Activated T-helper 1 cell treated with anti-CD3 and anti-CD28 coated beads, Interleukin-12 subunit alpha, Interleukin-12 subunit beta, Interleukin-2, Interleukin-4 antibody, amounts not matched to agents 30 ng/mL and 10 ng/mL and 1 ng/mL, durations not matched to agents 14 hours and 24 hours and 36 hours (primary cell): ENCODE measurements at regions of chr10 and their contacts with region 1.

Region 1: DNA sequence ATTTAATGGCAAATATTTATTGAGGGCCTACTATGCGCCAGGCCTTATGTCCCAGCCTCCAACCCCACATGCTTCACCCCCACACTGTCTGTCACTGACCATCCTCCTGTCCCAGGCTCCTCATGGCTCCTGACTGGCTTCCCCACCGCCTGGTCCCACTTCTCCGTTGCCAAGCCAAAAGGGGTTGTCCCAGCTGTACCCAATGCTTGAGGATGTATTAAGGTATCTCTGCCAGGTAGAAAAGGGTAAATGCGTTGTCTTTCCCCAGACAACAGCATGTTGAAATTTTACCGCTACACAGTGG is 168.8 kb upstream of the FRMD4A start:
- DNase-seq: no peak
- H3K4me3 Mint-ChIP-seq: no peak overlapping the region
- H3K27ac Mint-ChIP-seq: no peak overlapping the region
- H3K4me1 Mint-ChIP-seq: peaks cover 14% of the 10 kb centered on the region
- H3K27me3 Mint-ChIP-seq: peaks cover 4% of the 10 kb centered on the region

Region 2: GRCh38 chr10:14439451-14440259 is 59.9 kb before region 1 on chr10:
- intact Hi-C with region 1: no loop called
- DNase-seq: no peak
- H3K4me3 Mint-ChIP-seq: no peak overlapping the region
- H3K27ac Mint-ChIP-seq: no peak overlapping the region
- H3K4me1 Mint-ChIP-seq: no peaks in the 10 kb centered on the region
- H3K27me3 Mint-ChIP-seq: peaks cover 5% of the 10 kb centered on the region

Region 3: DNA sequence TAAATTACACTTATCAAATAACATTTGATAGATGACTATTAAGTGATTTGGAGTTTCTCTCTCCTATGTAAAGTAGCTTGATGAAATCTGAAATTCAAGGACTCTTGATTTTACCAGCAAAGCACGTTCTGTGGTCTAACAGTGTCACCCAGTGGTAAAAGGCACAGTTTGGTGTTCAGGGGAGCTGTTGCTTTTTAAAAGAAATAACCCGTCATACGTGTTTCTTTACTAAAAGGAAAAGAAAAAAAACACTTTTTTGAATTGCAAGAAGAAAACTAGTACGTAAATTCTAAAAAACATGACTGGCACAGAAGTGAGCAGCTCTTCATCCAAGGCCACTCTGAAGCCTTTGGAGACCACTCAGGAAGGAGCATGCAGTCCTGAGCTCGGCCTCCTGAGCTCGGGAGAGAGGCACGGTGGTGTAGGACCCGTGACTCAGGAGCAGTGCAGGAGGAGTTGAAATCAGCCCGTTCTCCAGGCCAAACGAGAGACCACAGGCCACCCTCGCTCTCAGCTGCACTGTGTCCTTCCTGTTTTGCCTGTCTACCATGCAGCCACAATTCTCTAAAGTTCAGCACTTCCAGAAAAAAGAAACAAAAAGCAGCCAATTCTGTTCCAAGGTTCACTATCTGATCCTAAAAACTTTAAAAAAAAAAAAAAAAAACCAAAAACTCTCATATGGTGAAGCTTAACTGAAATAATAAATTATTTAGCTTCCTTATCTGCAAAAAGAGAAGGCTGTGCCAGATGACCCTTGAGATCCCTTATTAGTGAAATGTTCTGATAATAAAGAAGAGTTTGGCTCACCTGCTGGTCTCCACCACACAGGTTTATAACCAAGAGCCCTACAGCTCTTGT is 43.7 kb after region 1 on chr10:
- intact Hi-C with region 1: loop called (anchors 1 kb)
- DNase-seq: no peak
- H3K4me3 Mint-ChIP-seq: peak overlapping the region; percentile 8
- H3K27ac Mint-ChIP-seq: peak overlapping the region; percentile 58
- H3K4me1 Mint-ChIP-seq: peaks cover 84% of the 10 kb centered on the region
- H3K27me3 Mint-ChIP-seq: no peaks in the 10 kb centered on the region

Region 4: DNA sequence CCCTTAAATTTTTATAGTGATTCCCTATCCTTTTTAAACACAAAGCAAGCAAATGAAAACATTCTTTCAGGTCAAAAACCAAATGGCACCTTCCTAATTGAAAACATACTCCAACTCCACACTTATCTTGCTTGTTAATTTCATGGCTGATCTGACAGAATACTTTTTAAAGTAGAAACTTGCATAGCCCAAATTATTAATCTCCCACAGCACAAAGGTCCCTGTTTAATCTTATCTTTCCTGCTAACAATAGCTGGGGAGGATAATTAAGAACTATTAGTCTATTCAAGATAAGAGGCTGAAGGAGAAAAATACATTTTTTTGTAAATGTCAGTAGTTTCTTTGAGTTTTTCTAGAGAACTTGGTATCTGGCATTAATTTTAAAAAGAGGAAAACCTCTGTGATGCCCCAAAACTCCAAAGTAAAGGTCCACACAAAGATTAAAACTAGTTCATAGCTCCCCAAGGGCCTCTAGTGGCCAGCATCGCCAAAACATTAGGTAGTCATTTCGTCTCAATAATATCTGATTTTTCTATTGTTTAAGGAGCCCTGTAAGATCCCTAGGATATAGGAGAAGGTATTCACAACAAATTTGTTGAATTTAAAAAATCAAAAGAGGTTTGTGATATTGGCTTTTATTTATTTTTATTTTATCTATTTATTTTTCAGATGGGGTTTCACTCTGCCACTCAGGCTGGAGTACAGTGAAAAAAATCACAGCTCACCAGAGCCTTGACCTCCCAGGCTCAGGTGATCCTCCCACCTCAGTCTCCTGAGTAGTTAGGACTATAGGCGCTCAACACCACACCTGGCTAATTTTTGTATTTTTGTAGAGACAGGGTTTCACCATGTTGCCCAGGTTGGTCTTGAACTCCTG is 323.6 kb after region 1 on chr10:
- intact Hi-C with region 1: loop called (anchors 1 kb)
- DNase-seq: no peak
- H3K4me3 Mint-ChIP-seq: no peak overlapping the region
- H3K27ac Mint-ChIP-seq: no peak overlapping the region
- H3K4me1 Mint-ChIP-seq: peaks cover 22% of the 10 kb centered on the region
- H3K27me3 Mint-ChIP-seq: peaks cover 9% of the 10 kb centered on the region

Region 5: GRCh38 chr10:14959276-14960057 is 459.9 kb after region 1 on chr10 and contains the start of gene MEIG1:
- intact Hi-C with region 1: loop called (anchors 2 kb)
- DNase-seq: peak; percentile 91
- H3K4me3 Mint-ChIP-seq: peak within 1 kb of the TSS; percentile 97
- H3K27ac Mint-ChIP-seq: peak within 1 kb of the TSS; percentile 95
- H3K4me1 Mint-ChIP-seq: peaks cover 22% of the 10 kb centered on the region
- H3K27me3 Mint-ChIP-seq: no peaks in the 10 kb centered on the region
- total RNA-seq, gene MEIG1: 0.44 TPM in 1 of 2 replicates, not detected in the other

Region 6: DNA sequence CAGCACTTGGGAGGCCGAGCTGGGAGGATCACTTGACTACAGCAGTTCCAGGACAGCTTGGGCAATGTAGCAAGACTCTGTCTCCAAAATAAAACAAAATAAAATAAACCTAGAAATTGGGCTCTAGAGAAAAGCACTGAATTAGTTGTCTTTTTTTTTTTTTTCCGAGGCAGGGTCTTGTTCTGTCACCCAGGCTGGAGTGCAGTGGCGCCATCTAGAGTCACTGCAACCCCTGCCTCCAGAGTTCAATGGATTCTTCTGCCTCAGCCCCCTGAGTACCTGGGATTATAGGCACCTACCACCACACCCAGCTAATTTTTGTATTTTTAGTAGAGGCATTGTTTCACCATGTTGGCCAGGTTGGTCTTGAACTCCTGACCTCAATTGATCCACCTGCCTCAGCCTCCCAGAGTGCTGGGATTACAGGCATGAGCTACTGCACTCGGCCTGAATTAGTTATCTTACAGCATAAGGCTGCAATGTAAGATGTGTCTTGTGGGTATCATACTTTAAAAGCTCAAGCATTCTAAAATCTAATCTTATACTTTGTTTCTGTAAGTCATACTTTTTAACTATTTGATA is 472.4 kb after region 1 on chr10:
- intact Hi-C with region 1: loop called (anchors 1 kb)
- DNase-seq: peak; percentile 36
- H3K4me3 Mint-ChIP-seq: no peak overlapping the region
- H3K27ac Mint-ChIP-seq: no peak overlapping the region
- H3K4me1 Mint-ChIP-seq: no peaks in the 10 kb centered on the region
- H3K27me3 Mint-ChIP-seq: peaks cover 5% of the 10 kb centered on the region